Endothelial cell of umbilical vein (primary cell): ENCODE measurements at regions of chr6 and their contacts with region 1.

Region 1: DNA sequence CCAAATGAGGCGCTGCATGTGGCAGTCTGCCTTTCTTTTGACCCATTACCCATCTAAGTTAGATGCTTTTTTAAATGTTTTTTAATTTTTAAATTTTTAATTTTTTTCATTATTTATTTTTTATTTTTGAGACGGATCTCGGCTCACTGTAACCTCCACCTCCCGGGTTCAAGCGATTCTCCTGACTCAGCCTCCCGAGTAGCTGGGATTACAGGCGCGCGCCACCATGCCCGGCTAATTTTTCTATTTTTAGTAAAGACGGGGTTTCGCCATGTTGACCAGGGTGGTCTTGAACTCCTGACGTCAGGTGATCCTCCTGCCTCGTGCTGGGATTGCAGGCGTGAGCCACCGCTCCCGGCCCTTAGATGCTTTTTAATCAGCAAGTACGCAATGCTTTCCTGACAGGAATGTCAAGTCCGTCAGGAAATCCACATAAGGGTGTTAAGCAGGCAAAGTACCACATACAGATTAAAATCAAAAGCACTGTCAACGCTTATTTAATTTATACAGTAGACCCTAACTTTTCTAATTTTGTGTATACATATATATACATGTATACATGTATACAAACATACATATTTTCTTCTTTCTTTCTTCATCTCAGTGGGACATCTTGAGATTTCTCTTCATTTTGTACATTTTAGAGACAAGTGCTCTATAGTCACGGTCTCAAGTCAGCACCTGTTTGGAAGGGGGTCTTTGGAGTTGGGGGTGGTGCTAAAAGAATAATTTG is 995 bp upstream of the GSTA4 start:
- DNase-seq: peak; percentile 69
- H3K4me3 ChIP-seq: peak overlapping the region in 1 of 3 experiments; percentile 19
- H3K27ac ChIP-seq: no peak overlapping the region
- H3K4me1 ChIP-seq: peaks cover 13% of the 10 kb centered on the region
- H3K27me3 ChIP-seq: no peaks in the 10 kb centered on the region
- CTCF ChIP-seq: no peak
- POLR2A ChIP-seq: no peak

Region 2: GRCh38 chr6:52438926-52439325 is 557.2 kb before region 1 on chr6:
- CTCF ChIA-PET with region 1: no interaction called
- POLR2A ChIA-PET with region 1: no interaction called
- dilution Hi-C with region 1: no loop called
- intact Hi-C with region 1: no loop called
- DNase-seq: no peak
- H3K4me3 ChIP-seq: no peak overlapping the region
- H3K27ac ChIP-seq: no peak overlapping the region
- H3K4me1 ChIP-seq: no peaks in the 10 kb centered on the region
- H3K27me3 ChIP-seq: no peaks in the 10 kb centered on the region
- CTCF ChIP-seq: no peak
- POLR2A ChIP-seq: no peak

Region 3: DNA sequence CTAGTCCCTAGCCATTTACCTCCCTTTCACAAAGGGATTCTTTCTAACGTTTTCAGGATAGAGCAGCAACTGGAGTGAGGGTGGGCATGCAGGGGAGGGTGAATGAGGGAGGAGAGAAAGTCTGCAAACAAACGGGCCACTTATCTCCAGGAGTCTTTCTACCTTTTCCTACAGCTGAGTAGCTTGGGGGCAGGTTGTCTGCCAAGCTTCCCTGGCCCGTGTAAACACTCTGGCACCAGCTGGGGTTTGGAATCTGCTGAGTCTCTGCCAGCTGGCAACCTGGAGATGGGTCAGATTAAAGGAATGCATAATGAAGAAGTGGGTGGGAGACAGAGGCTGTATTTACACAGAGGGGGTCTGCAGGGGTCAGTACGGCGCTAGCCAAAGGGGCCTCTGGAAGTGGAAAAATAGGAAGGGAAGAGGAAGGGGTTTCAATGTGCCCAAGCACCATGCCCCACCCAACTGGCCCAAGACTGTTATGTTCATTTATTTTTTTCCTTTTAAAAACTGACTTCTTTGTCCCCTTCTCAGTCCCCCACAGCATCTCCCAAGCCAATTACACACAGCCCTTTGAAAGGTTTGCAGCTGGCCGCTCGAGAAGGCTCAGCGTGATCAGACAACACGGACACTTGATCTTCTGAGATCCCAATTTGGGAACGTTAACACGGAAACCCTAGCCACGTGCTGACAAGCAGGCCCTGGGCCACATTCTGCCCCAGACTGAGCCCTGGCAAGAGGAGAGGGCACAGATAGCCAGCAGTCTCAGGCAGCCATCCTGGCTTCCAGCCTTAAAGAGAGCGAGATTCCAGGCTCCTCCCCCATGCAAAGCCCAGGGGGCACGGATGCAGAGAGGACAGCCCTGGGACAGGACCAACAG is 444.4 kb before region 1 on chr6:
- CTCF ChIA-PET with region 1: no interaction called
- POLR2A ChIA-PET with region 1: no interaction called
- dilution Hi-C with region 1: no loop called
- intact Hi-C with region 1: no loop called
- DNase-seq: peak; percentile 94
- H3K4me3 ChIP-seq: no peak overlapping the region
- H3K27ac ChIP-seq: peak overlapping the region; percentile 82
- H3K4me1 ChIP-seq: peaks cover 60% of the 10 kb centered on the region
- H3K27me3 ChIP-seq: no peaks in the 10 kb centered on the region
- CTCF ChIP-seq: no peak
- POLR2A ChIP-seq: no peak

Region 4: GRCh38 chr6:52664186-52664990 is 331.7 kb before region 1 on chr6:
- CTCF ChIA-PET with region 1: no interaction called
- POLR2A ChIA-PET with region 1: no interaction called
- dilution Hi-C with region 1: no loop called
- intact Hi-C with region 1: loop called (anchors 5 kb)
- DNase-seq: peak; percentile 95
- H3K4me3 ChIP-seq: peak overlapping the region; percentile 46 to 92 (median 54)
- H3K27ac ChIP-seq: peak overlapping the region; percentile 39
- H3K4me1 ChIP-seq: peaks cover 15% of the 10 kb centered on the region
- H3K27me3 ChIP-seq: no peaks in the 10 kb centered on the region
- CTCF ChIP-seq: no peak
- POLR2A ChIP-seq: peak; percentile 96

Region 5: GRCh38 chr6:53033764-53034163 is 37.7 kb after region 1 on chr6:
- CTCF ChIA-PET with region 1: interaction called, 17 read pairs
- POLR2A ChIA-PET with region 1: no interaction called
- dilution Hi-C with region 1: no loop called
- intact Hi-C with region 1: no loop called
- DNase-seq: peak; percentile 61
- H3K4me3 ChIP-seq: no peak overlapping the region
- H3K27ac ChIP-seq: no peak overlapping the region
- H3K4me1 ChIP-seq: peaks cover 17% of the 10 kb centered on the region
- H3K27me3 ChIP-seq: no peaks in the 10 kb centered on the region
- CTCF ChIP-seq: no peak
- POLR2A ChIP-seq: no peak

Region 6: GRCh38 chr6:53064726-53065215 is 68.7 kb after region 1 on chr6:
- CTCF ChIA-PET with region 1: interaction called, 49 read pairs
- POLR2A ChIA-PET with region 1: interaction called, 4 read pairs
- dilution Hi-C with region 1: no loop called
- intact Hi-C with region 1: no loop called
- DNase-seq: peak; percentile 98
- H3K4me3 ChIP-seq: peak overlapping the region; percentile 83 to 87 (median 87)
- H3K27ac ChIP-seq: peak overlapping the region; percentile 53
- H3K4me1 ChIP-seq: peaks cover 16% of the 10 kb centered on the region
- H3K27me3 ChIP-seq: no peaks in the 10 kb centered on the region
- CTCF ChIP-seq: no peak
- POLR2A ChIP-seq: peak; percentile 46

Region 7: GRCh38 chr6:53398247-53399026 is 402.4 kb after region 1 on chr6:
- CTCF ChIA-PET with region 1: no interaction called
- POLR2A ChIA-PET with region 1: no interaction called
- dilution Hi-C with region 1: no loop called
- intact Hi-C with region 1: no loop called
- DNase-seq: no peak
- H3K4me3 ChIP-seq: no peak overlapping the region
- H3K27ac ChIP-seq: no peak overlapping the region
- H3K4me1 ChIP-seq: no peaks in the 10 kb centered on the region
- H3K27me3 ChIP-seq: peaks cover 6 to 10% of the 10 kb centered on the region in 2 experiments
- CTCF ChIP-seq: no peak
- POLR2A ChIP-seq: no peak

Region 8: GRCh38 chr6:53544470-53545308 is 548.6 kb after region 1 on chr6 and contains the start of gene GCLC:
- CTCF ChIA-PET with region 1: no interaction called
- POLR2A ChIA-PET with region 1: no interaction called
- dilution Hi-C with region 1: no loop called
- intact Hi-C with region 1: loop called (anchors 5 kb)
- DNase-seq: peak; percentile 97
- H3K4me3 ChIP-seq: peak within 1 kb of the TSS; percentile 44 to 73 (median 63)
- H3K27ac ChIP-seq: peak within 1 kb of the TSS; percentile 53
- H3K4me1 ChIP-seq: peaks cover 24% of the 10 kb centered on the region
- H3K27me3 ChIP-seq: no peaks in the 10 kb centered on the region
- CTCF ChIP-seq: peak; percentile 39 to 65
- POLR2A ChIP-seq: peak; percentile 89
- total RNA-seq, gene GCLC: 17.3 and 22.8 TPM in 2 replicates